A673 (cell line): ENCODE measurements at regions of chr9 and their contacts with region 1.

Region 1: GRCh38 chr9:32251539-32251938 is 132.9 kb upstream of the ACO1 start:
- DNase-seq: peak; percentile 65
- H3K4me3 ChIP-seq: no peak overlapping the region
- H3K27ac ChIP-seq: no peak overlapping the region
- H3K4me1 ChIP-seq: no peaks in the 10 kb centered on the region
- H3K27me3 ChIP-seq: no peaks in the 10 kb centered on the region
- CTCF ChIP-seq: peak; percentile 85

Region 2: DNA sequence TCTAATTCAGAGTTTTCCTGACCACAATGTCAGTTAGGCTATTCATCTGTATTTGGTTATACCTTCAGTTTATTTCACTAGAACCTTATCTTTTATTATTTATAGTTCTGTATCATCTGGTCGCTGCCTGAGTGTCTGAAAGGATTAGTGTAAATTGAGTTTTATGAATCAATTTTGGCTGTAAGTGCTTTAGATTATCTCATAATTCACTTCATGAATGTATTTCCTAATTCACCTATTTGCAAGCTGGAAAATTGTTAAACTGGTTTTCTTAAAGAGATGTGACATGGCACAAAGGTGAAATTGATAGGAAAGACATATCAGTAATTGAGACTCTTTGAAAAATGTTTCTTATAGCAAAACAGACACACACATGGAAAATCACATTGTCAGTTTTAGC is 109.5 kb before region 1 on chr9:
- CTCF ChIA-PET with region 1: no interaction called
- POLR2A ChIA-PET with region 1: no interaction called
- intact Hi-C with region 1: loop called (anchors 10 kb)
- DNase-seq: no peak
- H3K4me3 ChIP-seq: no peak overlapping the region
- H3K27ac ChIP-seq: no peak overlapping the region
- H3K4me1 ChIP-seq: no peaks in the 10 kb centered on the region
- H3K27me3 ChIP-seq: no peaks in the 10 kb centered on the region
- CTCF ChIP-seq: no peak